Dendritic cell treated with granulocyte-macrophage colony-stimulating factor and Interleukin-4, amounts not matched to agents 40 ng/mL and 50 ng/mL, for 4 days (primary cell): ENCODE measurements at regions of chr6 and their contacts with region 1.

Region 1: DNA sequence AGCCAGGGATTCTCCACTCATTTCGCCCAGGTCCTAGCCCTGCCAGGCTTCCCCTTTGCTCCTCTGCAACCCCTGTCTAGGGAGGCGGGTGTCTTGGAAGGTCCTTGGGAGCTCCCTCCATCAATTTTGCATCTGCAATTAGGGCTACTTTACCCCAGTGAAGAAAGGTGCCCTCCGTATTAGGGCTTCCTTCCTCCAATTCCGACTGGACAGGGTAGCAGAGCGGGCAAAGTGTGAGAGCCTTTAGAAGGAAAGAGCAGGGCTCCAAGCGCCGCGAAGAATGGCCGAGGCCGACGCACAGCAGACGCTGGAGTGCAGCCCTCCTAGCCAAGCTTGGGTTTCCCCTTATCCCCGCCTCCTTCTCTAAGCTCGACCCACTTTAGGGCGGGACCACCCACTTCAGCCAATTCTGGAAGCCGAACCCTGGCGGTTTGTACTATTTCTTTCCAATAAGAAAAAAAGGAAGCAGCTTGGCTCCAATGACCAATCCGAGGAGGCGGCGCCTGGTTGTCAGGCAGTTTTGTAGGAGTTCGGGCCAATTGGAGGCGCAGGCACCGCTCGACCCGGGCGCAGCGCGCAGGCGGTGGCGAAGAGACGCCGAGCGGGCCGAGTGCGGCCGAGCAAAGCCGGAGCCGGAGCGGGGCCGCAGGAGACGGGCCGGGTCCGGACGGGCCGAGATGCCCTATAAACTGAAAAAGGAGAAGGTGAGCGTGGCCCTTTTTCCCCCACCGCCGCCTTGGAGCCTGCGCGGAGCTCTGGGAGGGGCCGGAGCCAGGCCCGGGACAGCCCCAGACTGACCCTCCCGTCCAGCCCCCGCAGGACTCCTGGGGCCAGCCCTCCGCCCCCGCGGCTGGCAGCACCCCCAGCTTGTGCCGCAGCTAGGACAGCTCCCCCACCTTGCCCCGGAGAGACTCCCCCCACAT is at the start of gene PPP2R5D:
- H3K4me3 Mint-ChIP-seq: peak within 1 kb of the TSS; percentile 80
- H3K27ac Mint-ChIP-seq: peak within 1 kb of the TSS; percentile 80
- H3K4me1 Mint-ChIP-seq: peaks cover 70% of the 10 kb centered on the region
- H3K27me3 Mint-ChIP-seq: no peaks in the 10 kb centered on the region

Region 2: GRCh38 chr6:42929821-42930360 is 54.4 kb before region 1 on chr6:
- intact Hi-C with region 1: loop called (anchors 5 kb)
- H3K4me3 Mint-ChIP-seq: peak overlapping the region; percentile 96
- H3K27ac Mint-ChIP-seq: peak overlapping the region; percentile 98
- H3K4me1 Mint-ChIP-seq: peaks cover 79% of the 10 kb centered on the region
- H3K27me3 Mint-ChIP-seq: no peaks in the 10 kb centered on the region

Region 3: GRCh38 chr6:43059168-43060033 is 75.1 kb after region 1 on chr6 and contains the starts of genes KLC4 and MRPL2:
- intact Hi-C with region 1: loop called (anchors 10 kb)
- H3K4me3 Mint-ChIP-seq: peak within 1 kb of the TSS; percentile 91
- H3K27ac Mint-ChIP-seq: peak within 1 kb of the TSS; percentile 97
- H3K4me1 Mint-ChIP-seq: peaks cover 29% of the 10 kb centered on the region
- H3K27me3 Mint-ChIP-seq: no peaks in the 10 kb centered on the region

Region 4: DNA sequence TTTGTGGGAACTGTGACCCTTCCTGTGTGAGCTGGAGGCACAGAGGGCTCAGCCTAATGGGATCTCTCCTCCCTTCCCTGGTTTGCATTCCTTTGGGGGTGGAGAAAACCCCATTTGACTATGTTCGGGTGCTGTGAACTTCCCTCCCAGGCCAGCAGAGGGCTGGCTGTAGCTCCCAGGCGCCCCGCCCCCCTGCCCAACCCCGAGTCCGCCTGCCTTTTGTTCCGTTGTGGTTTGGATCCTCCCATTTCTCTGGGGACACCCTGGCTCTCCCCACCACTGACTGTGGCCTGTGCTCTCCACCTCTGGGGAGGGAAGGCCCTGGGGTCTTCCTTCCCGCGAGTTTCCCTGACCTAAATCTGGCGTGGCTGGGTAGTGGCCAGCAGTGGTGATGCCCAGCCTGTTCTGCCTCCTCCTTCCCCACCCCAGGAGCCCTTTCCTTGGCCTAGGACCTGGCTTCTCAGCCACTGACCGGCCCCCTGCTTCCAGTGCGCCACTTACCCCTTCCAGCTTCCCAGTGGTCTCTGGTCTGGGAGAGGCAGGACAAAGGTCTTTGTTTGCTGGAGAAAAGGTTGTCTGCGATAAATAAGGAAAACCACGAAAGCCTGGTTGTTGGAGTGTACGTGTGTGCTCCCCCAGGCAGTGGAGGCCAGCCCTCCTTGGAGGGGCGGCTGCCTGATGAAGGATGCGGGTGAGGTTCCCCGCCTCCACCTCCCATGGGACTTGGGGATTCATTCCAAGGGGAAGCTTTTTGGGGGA is 790.7 kb after region 1 on chr6:
- intact Hi-C with region 1: no loop called
- H3K4me3 Mint-ChIP-seq: peak overlapping the region; percentile 62
- H3K27ac Mint-ChIP-seq: peak overlapping the region; percentile 51
- H3K4me1 Mint-ChIP-seq: peaks cover 55% of the 10 kb centered on the region
- H3K27me3 Mint-ChIP-seq: peaks cover 2% of the 10 kb centered on the region